AG04450 (cell line): ENCODE measurements at regions of chr13 and their contacts with region 1.

Region 1: DNA sequence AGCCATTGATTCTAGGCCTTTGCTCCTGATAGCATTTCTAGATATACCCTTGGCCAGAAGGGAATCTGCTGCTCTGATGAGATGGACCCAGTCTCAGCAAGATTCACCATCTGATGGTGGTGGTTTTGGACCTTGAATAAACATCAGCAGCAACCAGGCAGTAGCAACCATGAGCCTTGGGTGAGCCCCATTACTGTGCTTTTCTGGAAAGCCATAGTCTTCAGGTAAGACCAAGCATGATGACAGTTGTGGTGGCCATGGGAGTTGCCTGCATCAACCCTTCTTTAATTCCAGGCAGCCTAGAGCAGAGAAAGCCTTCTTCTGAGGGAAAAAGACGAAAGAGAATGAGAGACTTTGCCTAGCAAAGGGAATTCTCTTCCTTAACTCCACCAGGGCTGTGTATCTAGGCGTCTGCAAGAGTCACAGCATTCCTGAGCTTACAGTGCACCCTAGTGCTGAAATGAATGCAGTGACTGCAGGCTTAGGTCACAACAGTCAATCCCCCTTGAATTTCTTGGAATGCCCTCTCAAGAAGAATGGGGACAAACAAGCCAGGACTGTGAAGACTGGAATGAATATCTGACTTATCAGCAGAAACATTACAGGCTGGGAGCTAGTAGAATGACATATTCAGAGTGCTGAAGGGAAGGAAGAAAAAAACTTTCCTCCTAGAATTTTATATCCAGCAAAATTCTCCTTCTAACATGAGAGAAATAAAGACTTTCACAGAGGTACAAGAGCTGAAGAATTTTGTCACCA is 942.4 kb upstream of the PCDH20 start:
- DNase-seq: peak; percentile 48
- H3K4me3 ChIP-seq: no peak overlapping the region
- H3K27ac ChIP-seq: no peak overlapping the region
- H3K27me3 ChIP-seq: no peaks in the 10 kb centered on the region
- CTCF ChIP-seq: peak; percentile 82

Region 2: DNA sequence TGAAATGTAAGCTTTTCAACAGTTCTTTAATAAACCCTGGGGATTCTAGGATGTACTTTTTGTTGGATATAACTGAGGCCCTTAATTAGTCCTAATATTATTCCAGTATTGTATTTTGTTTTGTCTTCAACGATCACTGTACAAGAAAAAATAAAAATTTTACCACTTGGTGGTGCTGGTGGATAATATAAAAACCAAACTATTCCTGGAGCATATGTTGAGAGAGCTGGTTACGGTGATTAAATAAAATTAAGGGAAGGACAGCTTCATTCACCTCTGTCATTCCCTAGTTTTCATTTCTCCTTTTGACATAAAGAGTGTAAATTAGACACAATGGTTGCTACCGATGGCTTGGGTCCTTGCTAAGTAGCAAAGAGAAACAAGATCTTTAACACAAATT is 343.8 kb before region 1 on chr13:
- CTCF ChIA-PET with region 1: interaction called, 16 read pairs
- POLR2A ChIA-PET with region 1: no interaction called
- DNase-seq: no peak
- H3K4me3 ChIP-seq: no peak overlapping the region; the same call in 1 of the 2 replicates
- H3K27ac ChIP-seq: no peak overlapping the region
- H3K27me3 ChIP-seq: no peaks in the 10 kb centered on the region
- CTCF ChIP-seq: no peak

Region 3: DNA sequence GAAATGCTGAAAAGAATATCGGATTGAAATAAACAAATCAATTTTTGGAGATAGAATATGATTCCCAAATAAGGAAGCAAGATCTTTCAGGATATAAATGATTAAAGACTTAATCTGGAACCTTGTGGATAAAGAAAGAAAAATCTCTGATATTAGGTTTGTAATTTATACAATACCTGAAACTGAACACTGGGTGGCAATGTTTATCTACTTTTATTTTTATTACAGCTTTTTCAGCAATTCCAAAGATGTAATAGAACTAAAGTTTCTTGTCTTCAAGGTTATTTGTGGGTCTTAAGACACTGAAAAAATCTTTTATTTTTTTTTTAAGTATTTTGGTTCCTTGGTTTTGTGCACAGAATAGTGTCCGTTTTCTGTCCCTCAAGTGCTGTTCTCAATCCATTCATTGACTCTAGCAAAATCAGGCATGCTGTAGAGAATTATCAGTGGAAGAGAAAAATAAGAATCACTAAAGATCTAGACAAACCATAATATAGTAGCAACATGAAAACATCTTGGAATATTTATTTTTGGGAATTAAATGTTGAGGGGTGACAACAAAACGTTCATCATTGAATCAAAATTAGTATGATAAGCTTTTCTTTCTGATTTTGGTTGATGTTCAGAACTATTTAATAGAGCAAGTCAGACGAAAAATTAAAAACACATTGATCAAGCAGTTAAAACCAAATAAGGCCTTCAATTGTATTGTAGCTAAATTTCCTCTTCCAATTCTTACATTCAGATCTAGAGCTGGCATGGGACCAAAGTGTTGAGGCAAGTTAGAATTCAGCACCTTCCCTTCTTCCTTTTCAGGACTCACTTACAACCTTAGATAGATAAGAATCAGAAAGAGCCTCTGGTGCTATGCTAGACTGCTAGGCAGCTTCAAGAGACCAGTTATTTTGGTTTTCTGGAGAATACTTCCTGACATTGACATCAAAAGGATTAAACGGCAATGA is 238.0 kb before region 1 on chr13:
- CTCF ChIA-PET with region 1: interaction called, 76 read pairs
- POLR2A ChIA-PET with region 1: no interaction called
- DNase-seq: no peak
- H3K4me3 ChIP-seq: no peak overlapping the region
- H3K27ac ChIP-seq: no peak overlapping the region
- H3K27me3 ChIP-seq: no peaks in the 10 kb centered on the region
- CTCF ChIP-seq: peak; percentile 35